IMR-90 (cell line): ENCODE measurements at regions of chr6 and their contacts with region 1.

Region 1: DNA sequence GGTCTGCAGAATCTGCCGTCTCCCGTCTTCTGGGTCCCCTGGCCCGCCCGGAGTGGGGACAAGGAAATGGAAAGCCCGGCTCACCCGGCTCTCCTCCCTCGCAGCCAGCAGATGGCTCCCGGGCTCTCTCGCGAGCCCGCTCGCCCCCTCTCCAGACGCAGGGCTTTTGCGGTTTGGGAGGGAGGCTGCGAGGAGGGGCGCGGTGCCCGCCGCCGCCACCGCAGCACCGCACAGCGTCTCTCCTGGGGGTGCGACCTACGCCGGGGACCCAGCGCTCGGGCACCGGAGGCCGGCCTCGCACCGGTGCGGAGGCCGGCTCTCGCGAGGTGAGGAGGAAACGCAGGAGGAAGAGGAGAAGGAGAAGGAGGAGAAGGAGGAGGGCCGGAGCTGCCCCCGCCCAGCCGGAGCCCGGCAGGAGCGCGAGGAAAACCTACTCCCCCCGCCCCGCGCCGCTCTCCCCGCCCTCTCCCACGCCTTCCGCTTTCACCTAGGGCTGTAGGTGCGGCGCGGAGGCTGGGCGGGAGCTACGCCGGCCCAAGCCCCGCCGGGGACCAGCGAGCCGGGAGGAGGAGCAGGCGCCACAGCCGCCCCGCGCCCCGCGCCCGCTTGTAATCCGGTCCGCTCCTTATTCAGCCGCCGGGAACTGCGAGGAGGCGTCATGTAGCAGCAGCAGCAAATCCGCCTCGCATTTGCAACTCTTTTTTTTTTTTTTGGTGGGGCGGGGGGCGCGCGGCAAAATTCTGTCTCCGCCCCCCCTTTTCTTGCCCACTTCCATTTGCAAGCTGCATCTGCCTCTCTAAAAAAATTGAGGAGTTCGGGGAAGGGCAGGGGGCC is at the start of gene CARMIL1:
- DNase-seq: peak; percentile 52
- ATAC-seq: peak; percentile 89
- H3K4me3 ChIP-seq: peak within 1 kb of the TSS; percentile 80
- H3K27ac ChIP-seq: peak within 1 kb of the TSS; percentile 22; the same call in 1 of the 2 replicates
- H3K4me1 ChIP-seq: no peaks in the 10 kb centered on the region
- H3K27me3 ChIP-seq: no peaks in the 10 kb centered on the region; the same call in 1 of the 2 replicates
- CTCF ChIP-seq: peak; percentile 67
- POLR2A ChIP-seq: no peak
- RAD21 ChIP-seq: peak; percentile 65
- total RNA-seq, gene CARMIL1: 2.9 and 3.3 TPM in 2 replicates

Region 2: DNA sequence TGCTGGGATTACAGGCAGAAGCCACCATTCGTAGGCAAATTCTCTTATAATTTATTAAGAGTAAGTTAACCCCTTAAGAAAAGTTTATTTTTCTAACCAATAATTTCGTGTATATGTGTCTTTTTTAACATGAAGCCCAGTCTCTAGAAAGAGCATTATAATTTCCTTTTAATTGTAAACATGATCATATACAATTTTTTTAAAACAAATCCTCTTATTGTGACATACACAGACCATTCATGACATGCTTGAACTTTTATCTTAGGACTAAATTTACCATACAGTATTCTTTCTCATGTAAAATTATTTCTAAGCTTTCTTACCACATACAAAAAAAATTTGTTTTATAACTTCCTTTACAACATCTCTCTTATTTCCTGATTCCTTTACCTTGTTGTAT is 605.5 kb before region 1 on chr6:
- CTCF ChIA-PET with region 1: no interaction called
- POLR2A ChIA-PET with region 1: no interaction called
- dilution Hi-C with region 1: no loop called
- in situ Hi-C with region 1: no loop called
- intact Hi-C with region 1: no loop called
- DNase-seq: no peak
- ATAC-seq: no peak
- H3K4me3 ChIP-seq: no peak overlapping the region
- H3K27ac ChIP-seq: no peak overlapping the region
- H3K4me1 ChIP-seq: no peaks in the 10 kb centered on the region
- H3K27me3 ChIP-seq: no peaks in the 10 kb centered on the region
- CTCF ChIP-seq: no peak
- POLR2A ChIP-seq: no peak
- RAD21 ChIP-seq: no peak

Region 3: GRCh38 chr6:25027221-25027916 is 251.8 kb before region 1 on chr6:
- CTCF ChIA-PET with region 1: no interaction called
- POLR2A ChIA-PET with region 1: no interaction called
- dilution Hi-C with region 1: no loop called
- in situ Hi-C with region 1: no loop called
- intact Hi-C with region 1: no loop called
- DNase-seq: no peak
- ATAC-seq: no peak
- H3K4me3 ChIP-seq: no peak overlapping the region
- H3K27ac ChIP-seq: no peak overlapping the region
- H3K4me1 ChIP-seq: no peaks in the 10 kb centered on the region; the same call in 1 of the 2 replicates
- H3K27me3 ChIP-seq: no peaks in the 10 kb centered on the region
- CTCF ChIP-seq: no peak
- POLR2A ChIP-seq: no peak
- RAD21 ChIP-seq: no peak

Region 4: DNA sequence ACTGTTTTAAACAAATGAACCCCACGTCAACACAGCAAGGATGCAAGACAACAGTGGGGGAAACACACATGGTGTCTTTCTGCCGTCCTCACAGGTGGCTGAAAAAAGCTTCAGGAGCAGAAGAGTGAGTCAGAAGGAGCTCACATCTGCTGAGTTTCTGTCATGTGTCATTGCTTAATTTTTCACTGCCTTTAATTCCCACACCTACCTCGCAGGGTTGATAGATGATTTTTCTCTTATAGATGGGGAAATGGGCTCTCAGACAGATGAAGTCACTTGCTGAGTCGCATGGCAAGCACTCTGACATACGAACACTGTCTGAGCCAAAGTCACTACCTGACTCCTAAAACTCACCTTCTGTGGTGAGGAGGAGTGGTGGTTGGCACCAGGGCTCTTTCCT is 28.3 kb before region 1 on chr6:
- CTCF ChIA-PET with region 1: no interaction called
- POLR2A ChIA-PET with region 1: no interaction called
- dilution Hi-C with region 1: no loop called
- in situ Hi-C with region 1: no loop called
- intact Hi-C with region 1: no loop called
- DNase-seq: peak; percentile 46
- ATAC-seq: no peak
- H3K4me3 ChIP-seq: no peak overlapping the region
- H3K27ac ChIP-seq: no peak overlapping the region
- H3K4me1 ChIP-seq: no peaks in the 10 kb centered on the region
- H3K27me3 ChIP-seq: no peaks in the 10 kb centered on the region
- CTCF ChIP-seq: no peak
- POLR2A ChIP-seq: no peak
- RAD21 ChIP-seq: no peak

Region 5: GRCh38 chr6:25312703-25313501 is 33.8 kb after region 1 on chr6:
- CTCF ChIA-PET with region 1: interaction called, 3 read pairs
- POLR2A ChIA-PET with region 1: no interaction called
- dilution Hi-C with region 1: no loop called
- in situ Hi-C with region 1: no loop called
- intact Hi-C with region 1: loop called (anchors 1 kb)
- DNase-seq: peak; percentile 59
- ATAC-seq: peak; percentile 86
- H3K4me3 ChIP-seq: no peak overlapping the region
- H3K27ac ChIP-seq: peak overlapping the region; percentile 87; the same call in 1 of the 2 replicates
- H3K4me1 ChIP-seq: peaks cover 9% of the 10 kb centered on the region
- H3K27me3 ChIP-seq: no peaks in the 10 kb centered on the region
- CTCF ChIP-seq: no peak; the same call in 1 of the 2 replicates
- POLR2A ChIP-seq: no peak
- RAD21 ChIP-seq: no peak

Region 6: GRCh38 chr6:25359191-25359861 is 80.2 kb after region 1 on chr6:
- CTCF ChIA-PET with region 1: interaction called, 4 read pairs
- POLR2A ChIA-PET with region 1: interaction called, 3 read pairs
- dilution Hi-C with region 1: no loop called
- in situ Hi-C with region 1: no loop called
- intact Hi-C with region 1: loop called (anchors 2 kb)
- DNase-seq: peak; percentile 50
- ATAC-seq: peak; percentile 80
- H3K4me3 ChIP-seq: no peak overlapping the region
- H3K27ac ChIP-seq: peak overlapping the region; percentile 63; the same call in 1 of the 2 replicates
- H3K4me1 ChIP-seq: peaks cover 6% of the 10 kb centered on the region; the same call in 1 of the 2 replicates
- H3K27me3 ChIP-seq: no peaks in the 10 kb centered on the region
- CTCF ChIP-seq: no peak
- POLR2A ChIP-seq: no peak
- RAD21 ChIP-seq: no peak

Region 7: DNA sequence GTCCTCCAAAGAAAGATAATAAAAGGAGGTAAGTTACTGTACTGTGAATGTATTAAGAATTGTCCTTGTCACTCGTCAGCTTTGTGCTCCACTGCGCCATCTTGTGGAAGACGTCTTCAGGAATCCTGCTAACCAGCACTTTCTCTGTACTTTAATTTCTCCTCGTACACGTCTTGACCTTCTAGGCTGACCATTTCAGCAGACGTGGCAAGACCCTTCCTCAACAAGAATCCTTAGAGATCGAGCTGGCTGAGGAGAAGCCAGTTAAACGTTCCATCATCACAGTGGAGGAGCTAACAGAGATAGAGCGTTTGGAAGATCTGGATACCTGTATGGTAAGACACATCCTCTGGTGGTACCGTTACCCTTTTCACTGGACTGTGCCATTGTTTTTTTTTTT is 277.4 kb after region 1 on chr6:
- CTCF ChIA-PET with region 1: interaction called, 5 read pairs
- POLR2A ChIA-PET with region 1: no interaction called
- dilution Hi-C with region 1: no loop called
- in situ Hi-C with region 1: no loop called
- intact Hi-C with region 1: loop called (anchors 1 kb)
- DNase-seq: peak; percentile 74
- ATAC-seq: peak; percentile 77
- H3K4me3 ChIP-seq: no peak overlapping the region
- H3K27ac ChIP-seq: no peak overlapping the region
- H3K4me1 ChIP-seq: no peaks in the 10 kb centered on the region
- H3K27me3 ChIP-seq: no peaks in the 10 kb centered on the region
- CTCF ChIP-seq: peak; percentile 77
- POLR2A ChIP-seq: no peak
- RAD21 ChIP-seq: peak; percentile 66

Region 8: DNA sequence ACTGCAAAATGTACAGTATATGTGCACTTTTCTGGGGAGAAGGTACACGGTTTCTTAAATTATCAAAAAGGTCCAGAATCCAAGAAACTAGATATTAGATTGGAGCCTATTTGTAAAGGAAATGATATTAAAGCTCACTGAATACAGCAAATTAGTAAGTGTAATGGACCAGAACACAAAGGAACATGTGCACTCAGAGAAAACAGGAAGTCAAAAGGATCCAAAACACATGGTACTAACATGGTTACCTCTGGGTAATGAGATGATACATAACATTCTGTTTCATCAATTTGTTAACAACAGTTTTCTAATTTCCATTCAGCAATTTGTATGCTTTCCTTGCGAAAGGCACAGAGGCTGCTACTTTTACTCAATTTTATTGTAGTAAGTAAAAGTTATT is 1361.7 kb after region 1 on chr6:
- CTCF ChIA-PET with region 1: no interaction called
- POLR2A ChIA-PET with region 1: no interaction called
- dilution Hi-C with region 1: no loop called
- in situ Hi-C with region 1: no loop called
- intact Hi-C with region 1: no loop called
- DNase-seq: no peak
- ATAC-seq: no peak
- H3K4me3 ChIP-seq: no peak overlapping the region
- H3K27ac ChIP-seq: no peak overlapping the region
- H3K4me1 ChIP-seq: no peaks in the 10 kb centered on the region
- H3K27me3 ChIP-seq: no peaks in the 10 kb centered on the region
- CTCF ChIP-seq: no peak
- POLR2A ChIP-seq: no peak
- RAD21 ChIP-seq: no peak